ENCODE measurements at regions of chr4 and their contacts with region 1.

Region 1: GRCh38 chr4:14254252-14254651 is 626.7 kb upstream of the BOD1L1 start:
- DNase-seq: peak; percentile 36 to 52
- H3K4me3 ChIP-seq: no peak overlapping the region
- H3K4me3 Mint-ChIP-seq: no peak overlapping the region
- H3K27ac Mint-ChIP-seq: no peak overlapping the region
- H3K4me1 ChIP-seq: no peaks in the 10 kb centered on the region
- H3K4me1 Mint-ChIP-seq: no peaks in the 10 kb centered on the region
- H3K27me3 ChIP-seq: no peaks in the 10 kb centered on the region
- H3K27me3 Mint-ChIP-seq: no peaks in the 10 kb centered on the region
- CTCF ChIP-seq: peak; percentile 29 to 64

Region 2: DNA sequence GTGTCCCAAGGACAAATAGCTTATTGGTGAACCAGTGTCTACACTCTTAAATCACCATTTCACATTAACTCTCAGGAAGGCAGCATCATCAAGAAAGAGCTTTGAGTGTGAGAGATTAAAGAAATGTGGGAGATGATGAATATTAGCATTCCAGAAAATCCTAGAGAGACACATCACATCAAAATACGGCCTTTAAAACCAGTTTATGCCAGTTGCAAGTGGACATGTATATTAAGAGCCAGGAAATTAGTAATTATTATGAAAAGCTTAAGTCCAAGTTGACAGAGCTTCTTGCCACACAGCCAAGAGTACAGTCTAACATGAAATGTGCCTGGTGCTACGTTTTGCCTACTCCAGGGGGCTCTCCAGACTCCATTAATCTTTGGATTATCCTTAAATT is 123.7 kb before region 1 on chr4:
- CTCF ChIA-PET with region 1: no interaction called
- POLR2A ChIA-PET with region 1: no interaction called
- intact Hi-C with region 1: loop called (anchors 5 kb)
- DNase-seq: no peak
- H3K4me3 ChIP-seq: no peak overlapping the region
- H3K4me3 Mint-ChIP-seq: no peak overlapping the region
- H3K27ac Mint-ChIP-seq: no peak overlapping the region
- H3K4me1 ChIP-seq: no peaks in the 10 kb centered on the region
- H3K4me1 Mint-ChIP-seq: no peaks in the 10 kb centered on the region
- H3K27me3 ChIP-seq: no peaks in the 10 kb centered on the region
- H3K27me3 Mint-ChIP-seq: no peaks in the 10 kb centered on the region
- CTCF ChIP-seq: no peak